T-cell (primary cell): ENCODE measurements at regions of chr12 and their contacts with region 1.

Region 1: DNA sequence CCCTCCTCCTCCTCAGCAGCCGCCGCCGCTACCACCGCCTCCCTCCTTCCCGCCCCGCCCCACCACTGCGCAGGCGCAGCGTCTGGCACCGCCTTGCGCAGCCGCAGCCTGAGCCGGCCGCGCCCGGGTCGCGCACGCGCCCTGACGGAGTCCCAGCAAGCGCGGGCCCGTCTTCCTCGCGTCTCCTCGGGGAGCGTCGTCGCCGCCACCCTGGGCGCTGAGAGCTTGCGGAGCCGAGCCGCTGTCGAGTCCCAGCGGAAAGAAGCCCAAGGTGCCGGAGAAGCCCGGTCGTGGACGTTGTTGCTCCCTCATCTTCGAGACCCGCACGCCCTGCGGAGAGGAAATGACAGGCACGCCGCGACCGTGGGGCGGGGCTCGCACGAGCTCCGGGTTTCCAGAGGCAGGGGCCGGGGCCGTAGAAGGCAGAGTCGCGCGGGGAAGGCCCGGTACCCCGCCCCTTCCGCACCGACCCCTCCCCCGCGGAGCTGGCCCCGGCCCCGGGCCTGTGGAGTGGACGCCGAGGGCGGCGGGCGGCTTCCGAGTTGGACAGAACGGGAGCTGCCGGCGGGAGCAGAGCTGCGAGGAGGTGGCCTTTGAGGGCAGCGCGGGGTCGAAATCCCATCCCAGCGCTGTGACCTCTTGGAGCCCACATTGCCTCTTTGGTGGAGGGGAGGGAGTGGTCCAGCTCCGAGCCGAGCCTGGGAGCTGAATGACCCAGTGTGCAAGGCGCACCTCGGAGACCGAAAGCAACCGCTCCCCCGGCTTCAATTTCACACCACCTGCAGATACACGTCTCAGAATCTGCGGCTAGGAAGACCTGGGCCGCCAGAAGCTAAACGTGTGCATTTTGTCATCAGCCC is 469 bp upstream of the RAB35 start:
- DNase-seq: peak; percentile 90 to 98 (median 95)
- ATAC-seq: peak; percentile 80 to 83 (median 81)
- H3K4me3 ChIP-seq: peak overlapping the region; percentile 88 to 96
- H3K4me3 Mint-ChIP-seq: peak overlapping the region; percentile 89 to 96 (median 91)
- H3K27ac ChIP-seq: peak overlapping the region; percentile 89
- H3K27ac Mint-ChIP-seq: peak overlapping the region; percentile 88 to 89
- H3K4me1 ChIP-seq: peaks cover 34 to 67% of the 10 kb centered on the region in 2 experiments
- H3K4me1 Mint-ChIP-seq: peaks cover 75 to 84% (median 80%) of the 10 kb centered on the region in 3 donors
- H3K27me3 ChIP-seq: no peaks in the 10 kb centered on the region
- H3K27me3 Mint-ChIP-seq: no peaks in the 10 kb centered on the region

Region 2: GRCh38 chr12:120200364-120200800 is 83.4 kb after region 1 on chr12:
- CTCF ChIA-PET with region 1: interaction called, 5 to 15 read pairs
- POLR2A ChIA-PET with region 1: interaction called, 4 to 21 read pairs
- DNase-seq: no peak
- ATAC-seq: no peak
- H3K4me3 ChIP-seq: peak overlapping the region; percentile 66 to 92
- H3K4me3 Mint-ChIP-seq: peak overlapping the region; percentile 94 to 97 (median 96)
- H3K27ac ChIP-seq: peak overlapping the region; percentile 59
- H3K27ac Mint-ChIP-seq: peak overlapping the region; percentile 99
- H3K4me1 ChIP-seq: peaks cover 11 to 37% of the 10 kb centered on the region in 2 experiments
- H3K4me1 Mint-ChIP-seq: peaks cover 36 to 46% (median 43%) of the 10 kb centered on the region in 3 donors
- H3K27me3 ChIP-seq: no peaks in the 10 kb centered on the region
- H3K27me3 Mint-ChIP-seq: no peaks in the 10 kb centered on the region

Region 3: DNA sequence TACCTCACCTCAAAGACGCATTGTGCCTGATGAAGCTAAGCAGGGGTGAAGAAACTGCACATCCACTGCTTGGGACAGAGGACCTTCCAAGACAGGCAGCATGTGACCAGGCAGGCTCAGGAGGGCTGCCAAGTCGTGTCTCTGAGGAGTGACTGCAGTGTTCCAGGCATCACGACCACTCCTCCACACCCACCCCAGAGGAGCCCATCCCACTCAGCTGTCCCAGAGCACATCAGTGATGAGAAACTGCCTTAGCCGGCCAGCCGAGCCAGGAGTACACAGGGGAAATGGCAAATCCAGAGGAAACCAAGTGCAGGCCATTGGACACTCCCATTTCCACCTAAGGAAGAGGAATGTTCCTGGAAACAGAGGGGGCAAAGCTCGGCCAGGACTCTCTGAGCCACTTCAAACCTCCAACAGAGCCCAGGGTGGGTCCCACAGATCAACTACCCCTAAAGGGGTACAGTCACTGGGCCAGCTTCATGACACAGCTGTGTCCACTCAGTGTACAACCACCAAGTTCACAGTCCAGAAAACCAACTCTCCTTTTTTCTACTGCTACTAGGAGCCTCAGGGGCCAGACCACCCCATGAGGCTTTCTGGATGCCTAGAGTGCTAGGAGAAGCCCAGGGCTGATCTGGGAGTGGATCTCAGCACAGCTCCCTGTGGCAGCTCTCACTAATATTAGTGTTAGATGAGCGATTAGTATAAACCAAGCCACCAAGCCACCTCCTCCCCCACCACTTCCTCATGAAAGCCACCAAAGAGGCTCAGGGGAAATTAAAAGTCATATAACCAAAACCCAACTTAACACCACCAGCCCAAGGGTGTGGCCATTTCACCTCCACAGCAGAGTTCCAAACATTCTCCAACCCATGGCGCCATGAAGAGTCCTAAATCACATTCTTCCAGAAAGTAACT is 133.1 kb after region 1 on chr12:
- CTCF ChIA-PET with region 1: no interaction called
- POLR2A ChIA-PET with region 1: no interaction called
- DNase-seq: peak in 17 of 35 experiments; percentile 25 to 66 (median 40)
- ATAC-seq: peak in 1 of 4 experiments; percentile 13
- H3K4me3 ChIP-seq: peak overlapping the region; percentile 26 to 30
- H3K4me3 Mint-ChIP-seq: peak overlapping the region; percentile 62 to 64 (median 63)
- H3K27ac ChIP-seq: peak overlapping the region; percentile 75
- H3K27ac Mint-ChIP-seq: peak overlapping the region; percentile 88
- H3K4me1 ChIP-seq: peaks cover 53 to 85% of the 10 kb centered on the region in 2 experiments
- H3K4me1 Mint-ChIP-seq: peaks cover 83 to 86% (median 83%) of the 10 kb centered on the region in 3 donors
- H3K27me3 ChIP-seq: no peaks in the 10 kb centered on the region
- H3K27me3 Mint-ChIP-seq: no peaks in the 10 kb centered on the region